ENCODE measurements at regions of chr9 and their contacts with region 1.

Region 1: DNA sequence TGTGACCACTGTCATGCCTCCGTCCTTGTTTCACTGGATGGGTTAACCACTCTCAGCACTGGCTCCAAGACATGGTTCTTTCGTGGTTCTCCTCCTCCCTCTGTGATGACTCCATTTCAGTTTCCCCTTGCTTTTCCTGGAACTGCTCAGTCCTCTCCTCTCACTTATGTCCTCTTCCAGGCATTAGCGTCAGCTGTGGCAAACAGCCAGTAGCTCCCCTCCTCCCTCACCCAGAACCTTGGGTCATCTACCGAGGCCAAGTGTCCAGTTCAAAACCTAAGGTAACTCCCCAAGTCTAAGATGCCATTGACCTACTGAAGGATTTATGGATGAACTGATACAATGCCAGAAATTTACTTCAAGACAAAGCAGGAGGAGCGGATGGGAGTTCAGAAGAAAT is 9.8 kb upstream of the CORO2A start:
- DNase-seq: no peak
- H3K4me3 ChIP-seq: no peak overlapping the region
- H3K27ac ChIP-seq: no peak overlapping the region
- H3K27me3 ChIP-seq: no peaks in the 10 kb centered on the region
- CTCF ChIP-seq: no peak

Region 2: DNA sequence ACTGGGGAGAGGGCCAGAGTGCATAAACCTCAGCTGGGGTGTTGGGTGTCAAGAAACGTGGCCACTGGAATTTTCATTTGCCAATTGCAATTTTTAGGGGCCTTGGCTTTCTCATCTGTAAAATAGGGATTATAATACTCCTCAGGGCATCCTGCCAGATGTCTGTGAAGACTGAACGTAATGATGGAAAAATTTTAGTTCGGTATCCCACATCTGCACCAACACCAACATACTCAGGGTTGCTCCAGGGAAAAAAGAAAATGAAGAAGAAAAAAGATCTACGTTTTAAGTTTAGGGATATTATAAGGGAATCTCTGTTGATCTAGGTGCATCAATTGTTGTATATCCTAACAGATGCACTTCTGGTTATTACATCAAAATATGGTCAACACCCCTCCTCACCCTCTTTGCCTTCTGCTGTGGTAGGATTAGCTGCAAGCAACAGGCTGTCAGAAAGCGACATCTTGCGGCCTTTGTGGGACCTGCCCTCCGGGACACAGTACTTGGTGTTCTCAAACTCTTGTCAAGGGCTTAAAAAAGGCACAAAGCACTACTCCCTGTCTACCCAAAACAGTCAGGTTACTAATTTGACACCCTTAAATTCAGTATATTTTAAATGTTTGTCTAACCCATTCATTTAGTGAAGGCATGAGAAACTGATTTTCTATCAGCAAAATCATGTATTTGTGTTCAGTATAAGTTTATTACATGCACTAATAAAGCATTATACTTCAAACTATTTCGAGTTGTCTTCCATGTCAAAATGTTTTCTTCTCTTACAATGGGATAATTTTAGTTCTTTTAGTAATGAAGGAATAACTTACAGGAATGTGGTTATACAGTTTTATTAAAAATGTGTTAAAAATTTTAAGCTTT is 61.5 kb after region 1 on chr9:
- CTCF ChIA-PET with region 1: interaction called, 49 read pairs
- POLR2A ChIA-PET with region 1: no interaction called
- DNase-seq: peak; percentile 61
- H3K4me3 ChIP-seq: no peak overlapping the region
- H3K27ac ChIP-seq: no peak overlapping the region
- H3K27me3 ChIP-seq: no peaks in the 10 kb centered on the region
- CTCF ChIP-seq: peak; percentile 99

Region 3: DNA sequence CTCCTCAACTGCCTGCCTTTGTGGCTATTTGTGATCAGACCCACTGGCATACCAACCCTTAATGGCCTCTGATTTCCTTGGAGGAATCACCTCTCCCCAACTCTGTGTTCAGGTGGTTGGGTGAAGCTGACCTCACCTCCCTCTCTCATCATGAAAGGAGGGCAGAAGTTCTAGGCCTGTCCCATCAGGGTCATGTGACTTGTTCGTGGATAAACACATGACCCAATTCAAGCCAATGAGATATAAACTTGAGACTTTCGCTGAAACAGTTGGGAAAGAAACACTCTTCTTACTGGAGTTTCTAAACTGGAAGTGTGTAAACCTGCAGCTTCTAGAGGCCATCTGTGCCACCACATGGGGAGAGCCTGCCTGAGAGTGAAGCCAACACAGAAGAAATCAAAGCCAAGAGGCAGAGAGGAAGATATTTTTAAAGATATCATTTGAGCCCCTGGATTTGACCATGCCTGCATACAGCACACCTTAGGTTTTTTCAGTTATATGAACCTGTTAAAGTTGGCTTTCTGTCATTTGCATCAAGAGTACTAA is 500.7 kb after region 1 on chr9:
- CTCF ChIA-PET with region 1: no interaction called
- POLR2A ChIA-PET with region 1: no interaction called
- DNase-seq: no peak
- H3K4me3 ChIP-seq: no peak overlapping the region
- H3K27ac ChIP-seq: no peak overlapping the region
- H3K27me3 ChIP-seq: peaks cover 37% of the 10 kb centered on the region
- CTCF ChIP-seq: no peak